GM10248 (cell line): ENCODE measurements at regions of chr10 and their contacts with region 1.

Region 1: GRCh38 chr10:3852147-3852904 is 67.3 kb upstream of the KLF6 start:
- DNase-seq: peak; percentile 73
- CTCF ChIP-seq: no peak

Region 2: GRCh38 chr10:3805791-3806461 is 46.4 kb before region 1 on chr10:
- CTCF ChIA-PET with region 1: interaction called, 11 read pairs
- POLR2A ChIA-PET with region 1: interaction called, 12 read pairs
- DNase-seq: peak; percentile 45
- CTCF ChIP-seq: no peak

Region 3: GRCh38 chr10:3828404-3829155 is 23.7 kb before region 1 on chr10:
- CTCF ChIA-PET with region 1: interaction called, 10 read pairs
- POLR2A ChIA-PET with region 1: interaction called, 3 read pairs
- DNase-seq: peak; percentile 66
- CTCF ChIP-seq: no peak

Region 4: GRCh38 chr10:3866332-3866731 is 14.0 kb after region 1 on chr10:
- CTCF ChIA-PET with region 1: interaction called, 11 read pairs
- POLR2A ChIA-PET with region 1: interaction called, 5 read pairs
- DNase-seq: no peak
- CTCF ChIP-seq: no peak

Region 5: GRCh38 chr10:3873728-3874461 is 21.6 kb after region 1 on chr10:
- CTCF ChIA-PET with region 1: interaction called, 4 read pairs
- POLR2A ChIA-PET with region 1: interaction called, 10 read pairs
- DNase-seq: peak; percentile 79
- CTCF ChIP-seq: no peak